Transverse colon (tissue), 4 donors: ENCODE measurements at regions of chr2 and their contacts with region 1.

Region 1: GRCh38 chr2:150487537-150488429 is at the start of gene RND3:
- DNase-seq: peak; percentile 97
- H3K4me3 ChIP-seq: peak within 1 kb of the TSS; percentile 58 to 75 (median 69)
- H3K27ac ChIP-seq: peak within 1 kb of the TSS; percentile 93 to 96 (median 96)
- H3K4me1 ChIP-seq: peaks cover 6 to 24% (median 16%) of the 10 kb centered on the region in 4 donors
- H3K27me3 ChIP-seq: no peaks in the 10 kb centered on the region
- CTCF ChIP-seq: peak; percentile 74 to 93 (median 82)
- EP300 ChIP-seq: no peak
- POLR2A ChIP-seq: peak; percentile 98
- total RNA-seq, gene RND3: 16.5 to 54.6 (median 46.1) TPM

Region 2: DNA sequence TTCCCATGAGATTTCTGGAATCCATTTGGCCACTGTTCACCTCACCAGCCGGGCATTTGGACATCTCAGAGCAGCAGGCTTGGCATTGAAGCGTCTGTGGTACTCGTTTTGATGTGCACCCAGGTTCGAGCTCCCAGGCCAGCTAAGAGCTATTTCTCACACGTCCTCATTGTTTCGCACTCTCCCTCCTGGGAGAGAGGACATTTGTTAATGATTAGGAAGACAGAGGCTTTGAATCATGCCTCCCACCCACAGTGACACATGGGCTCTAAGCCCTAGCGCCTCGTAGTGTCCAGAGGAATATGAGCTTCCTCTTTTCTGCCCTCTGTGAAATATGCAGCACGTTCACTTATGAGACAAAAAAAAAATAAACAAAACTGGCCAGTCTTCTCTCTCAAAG is 362.1 kb before region 1 on chr2:
- in situ Hi-C with region 1: no loop called
- intact Hi-C with region 1: no loop called
- DNase-seq: no peak
- H3K4me3 ChIP-seq: no peak overlapping the region
- H3K27ac ChIP-seq: no peak overlapping the region
- H3K4me1 ChIP-seq: peaks cover 0 to 3% (median 0%) of the 10 kb centered on the region in 4 donors
- H3K27me3 ChIP-seq: no peaks in the 10 kb centered on the region
- CTCF ChIP-seq: no peak
- EP300 ChIP-seq: no peak
- POLR2A ChIP-seq: no peak

Region 3: GRCh38 chr2:150832686-150833085 is 344.9 kb after region 1 on chr2:
- in situ Hi-C with region 1: no loop called
- intact Hi-C with region 1: no loop called
- DNase-seq: no peak
- H3K4me3 ChIP-seq: no peak overlapping the region
- H3K27ac ChIP-seq: no peak overlapping the region
- H3K4me1 ChIP-seq: no peaks in the 10 kb centered on the region
- H3K27me3 ChIP-seq: no peaks in the 10 kb centered on the region
- CTCF ChIP-seq: no peak
- EP300 ChIP-seq: no peak
- POLR2A ChIP-seq: no peak

Region 4: GRCh38 chr2:151238527-151239487 is 751.0 kb after region 1 on chr2:
- in situ Hi-C with region 1: loop called in 1 of 4 experiments (anchors 25 kb)
- intact Hi-C with region 1: no loop called
- DNase-seq: peak; percentile 27
- H3K4me3 ChIP-seq: no peak overlapping the region
- H3K27ac ChIP-seq: no peak overlapping the region
- H3K4me1 ChIP-seq: peaks cover 0 to 6% (median 0%) of the 10 kb centered on the region in 4 donors
- H3K27me3 ChIP-seq: no peaks in the 10 kb centered on the region
- CTCF ChIP-seq: peak; percentile 60 to 84 (median 79)
- EP300 ChIP-seq: no peak
- POLR2A ChIP-seq: no peak